ENCODE measurements at regions of chr4 and their contacts with region 1.

Region 1: GRCh38 chr4:106809076-106809475 is 227.0 kb downstream of the DKK2 start:
- DNase-seq: no peak
- H3K4me3 ChIP-seq: no peak overlapping the region
- H3K27ac ChIP-seq: no peak overlapping the region
- H3K4me1 ChIP-seq: no peaks in the 10 kb centered on the region
- H3K27me3 ChIP-seq: no peaks in the 10 kb centered on the region
- CTCF ChIP-seq: no peak

Region 2: DNA sequence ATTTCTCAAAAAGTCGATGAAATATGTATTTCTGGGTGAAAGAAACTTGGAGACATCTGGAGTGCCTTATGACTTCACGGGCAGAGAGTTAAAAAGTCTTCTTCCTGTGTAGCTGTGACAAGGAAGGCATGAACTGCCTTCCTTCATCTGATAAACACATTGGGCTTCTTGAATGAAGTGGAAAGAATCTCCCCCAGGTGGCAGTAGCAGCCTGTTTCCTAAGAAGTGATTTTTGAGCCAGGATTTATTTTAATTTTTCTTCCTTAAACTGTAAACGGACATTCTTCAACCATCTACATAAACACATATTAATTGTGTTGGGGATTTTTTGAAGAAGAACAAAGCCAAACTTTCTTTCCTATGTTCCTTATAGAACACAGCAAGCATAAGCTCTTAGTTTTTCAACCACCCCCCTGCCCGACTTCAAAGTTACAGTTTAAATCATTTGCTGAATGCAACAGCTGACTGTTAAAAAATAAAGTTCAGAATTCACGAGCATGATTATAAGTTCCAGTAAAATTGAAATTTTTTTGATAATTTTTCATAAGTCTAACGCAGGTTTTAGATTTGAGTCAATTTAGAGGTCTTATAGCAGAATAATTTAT is 439.5 kb before region 1 on chr4:
- intact Hi-C with region 1: loop called (anchors 2 kb)
- DNase-seq: peak; percentile 22
- H3K4me3 ChIP-seq: no peak overlapping the region
- H3K27ac ChIP-seq: no peak overlapping the region
- H3K4me1 ChIP-seq: no peaks in the 10 kb centered on the region
- H3K27me3 ChIP-seq: no peaks in the 10 kb centered on the region
- CTCF ChIP-seq: peak; percentile 72